ENCODE measurements at regions of chr12 and their contacts with region 1.

Region 1: GRCh38 chr12:49866859-49867579 is 24.1 kb upstream of the BCDIN3D start:
- DNase-seq: peak; percentile 66 to 95
- ATAC-seq: peak; percentile 55 to 92
- H3K4me3 ChIP-seq: no peak overlapping the region
- H3K27ac ChIP-seq: peak overlapping the region in 1 of 2 experiments; percentile 22; a peak in 1 of 6 replicates
- H3K4me1 ChIP-seq: no peaks in the 10 kb centered on the region; the same call in 2 of the 3 replicates
- CTCF ChIP-seq: peak; percentile 88
- EP300 ChIP-seq: no peak
- POLR2A ChIP-seq: no peak
- RAD21 ChIP-seq: peak; percentile 84 to 91

Region 2: DNA sequence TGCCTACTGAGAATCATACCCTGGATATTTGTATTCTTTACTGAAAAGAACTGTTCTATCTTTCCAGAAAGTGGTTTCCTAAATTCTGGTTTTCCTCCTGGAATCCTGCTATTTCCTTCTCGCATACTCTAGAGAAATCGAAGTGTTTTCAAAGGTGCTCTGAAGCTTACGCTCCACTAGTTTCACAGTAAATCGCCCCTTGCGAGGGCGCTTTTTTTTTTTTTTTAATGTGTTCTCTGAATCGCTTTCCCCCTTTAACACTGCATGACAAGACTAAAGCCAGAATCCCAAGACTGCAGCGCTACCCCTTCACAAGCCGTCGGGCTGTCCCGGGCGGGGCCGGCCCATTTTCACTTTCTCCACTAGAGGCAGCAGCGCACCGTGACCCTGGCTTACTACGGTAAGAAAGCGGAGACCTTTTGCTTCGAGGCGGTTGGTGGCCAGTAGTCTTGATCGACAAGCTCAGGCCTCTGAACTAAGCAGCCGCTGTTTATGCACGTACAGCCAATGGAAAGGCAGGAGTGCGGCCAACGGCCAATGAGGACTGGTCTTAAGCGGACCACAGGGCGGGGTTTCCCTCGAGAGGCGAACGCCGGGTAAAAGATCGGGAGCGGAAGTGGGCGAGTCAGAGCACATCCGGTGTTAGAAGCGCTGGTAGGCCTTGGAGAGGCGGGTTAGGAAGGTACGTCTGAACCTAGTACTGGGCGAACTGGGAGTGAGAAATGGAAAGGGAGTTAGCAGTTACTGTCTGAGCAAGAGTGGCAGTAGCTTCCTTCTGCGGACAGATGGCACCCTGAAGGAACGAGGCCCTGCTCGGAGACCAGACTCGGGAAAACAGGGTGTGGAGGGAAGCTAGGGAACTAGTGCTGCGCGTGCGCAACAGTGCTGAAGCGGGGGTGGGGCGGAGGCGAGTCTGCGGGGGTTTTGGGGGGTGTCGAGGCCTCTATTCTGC is 125.8 kb before region 1 on chr12 and contains the start of gene TMBIM6:
- CTCF ChIA-PET with region 1: interaction called, 10 read pairs
- POLR2A ChIA-PET with region 1: no interaction called
- DNase-seq: peak; percentile 97 to 100
- ATAC-seq: peak; percentile 98
- H3K4me3 ChIP-seq: peak within 1 kb of the TSS; percentile 67
- H3K27ac ChIP-seq: peak within 1 kb of the TSS; percentile 71 to 92
- H3K4me1 ChIP-seq: peaks cover 18% of the 10 kb centered on the region
- CTCF ChIP-seq: peak; percentile 81
- EP300 ChIP-seq: no peak
- POLR2A ChIP-seq: peak; percentile 97
- RAD21 ChIP-seq: peak; percentile 42 to 62; a peak in 4 of 5 replicates
- polyA plus RNA-seq, gene TMBIM6: 1,088 and 1,255 TPM in 2 replicates

Region 3: GRCh38 chr12:49882851-49883470 is 15.9 kb after region 1 on chr12:
- CTCF ChIA-PET with region 1: interaction called, 42 read pairs
- POLR2A ChIA-PET with region 1: no interaction called
- DNase-seq: no peak
- ATAC-seq: peak in 1 of 2 experiments; percentile 58; a peak in 3 of 6 replicates
- H3K4me3 ChIP-seq: no peak overlapping the region
- H3K27ac ChIP-seq: no peak overlapping the region
- H3K4me1 ChIP-seq: peaks cover 5% of the 10 kb centered on the region
- CTCF ChIP-seq: no peak
- EP300 ChIP-seq: no peak
- POLR2A ChIP-seq: no peak
- RAD21 ChIP-seq: no peak

Region 4: DNA sequence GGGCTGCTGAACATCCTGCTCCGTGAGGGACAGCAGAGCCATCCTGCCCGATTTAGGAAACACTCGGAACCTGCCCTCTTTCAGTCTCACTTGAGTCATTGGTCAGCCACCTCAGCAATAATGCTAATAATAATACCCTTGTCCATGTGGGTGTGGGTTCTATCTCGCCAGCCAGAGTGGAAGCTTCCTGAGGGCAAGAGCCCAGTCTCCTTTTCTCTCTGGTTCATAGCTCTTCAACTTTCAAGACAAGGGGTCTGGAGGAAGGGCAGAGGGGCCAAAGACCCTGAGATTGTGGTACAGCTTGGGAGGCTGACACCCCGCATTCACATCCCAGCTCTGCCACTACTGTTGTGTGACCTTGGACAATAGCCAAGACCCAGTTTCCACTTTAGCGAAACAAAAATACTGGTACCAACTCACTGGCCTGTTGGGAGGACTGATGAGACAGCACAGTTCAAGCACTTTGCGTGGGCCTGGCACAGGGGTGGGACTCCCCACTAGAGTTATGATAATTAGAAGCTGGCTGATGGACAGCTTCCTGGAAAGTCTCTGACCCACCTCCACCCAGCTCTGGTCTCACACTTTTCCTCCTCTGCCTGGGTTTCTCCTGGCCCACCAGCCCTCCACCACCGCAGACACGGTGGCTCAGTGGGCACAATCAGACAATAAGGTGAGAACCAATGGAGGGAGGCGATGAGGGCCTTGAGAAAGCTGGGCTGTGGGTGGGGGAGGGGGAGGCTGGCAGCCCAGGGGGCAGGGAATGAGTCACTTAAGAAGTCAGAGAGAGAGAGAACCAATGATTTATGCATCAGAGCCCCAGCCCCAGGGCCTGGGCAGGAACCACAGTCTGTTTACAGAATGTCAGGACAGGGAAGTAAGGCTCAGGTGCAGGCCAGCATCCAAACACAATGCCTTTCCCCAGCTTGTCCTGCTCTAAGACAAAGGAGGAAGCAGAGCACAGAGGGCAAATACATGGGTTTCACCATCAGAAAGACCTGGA is 27.0 kb after region 1 on chr12:
- CTCF ChIA-PET with region 1: interaction called, 28 read pairs
- POLR2A ChIA-PET with region 1: no interaction called
- DNase-seq: peak; percentile 42 to 68
- ATAC-seq: peak; percentile 14 to 47; a peak in 3 of 6 replicates
- H3K4me3 ChIP-seq: no peak overlapping the region
- H3K27ac ChIP-seq: peak overlapping the region; percentile 36 to 68; a peak in 5 of 6 replicates
- H3K4me1 ChIP-seq: peaks cover 13% of the 10 kb centered on the region
- CTCF ChIP-seq: no peak
- EP300 ChIP-seq: no peak
- POLR2A ChIP-seq: no peak
- RAD21 ChIP-seq: no peak

Region 5: GRCh38 chr12:49959570-49960465 is 92.8 kb after region 1 on chr12:
- CTCF ChIA-PET with region 1: interaction called, 104 read pairs
- POLR2A ChIA-PET with region 1: no interaction called
- DNase-seq: peak; percentile 54 to 64
- ATAC-seq: peak; percentile 9 to 52; a peak in 3 of 6 replicates
- H3K4me3 ChIP-seq: no peak overlapping the region
- H3K27ac ChIP-seq: peak overlapping the region in 1 of 2 experiments; percentile 59; a peak in 3 of 6 replicates
- H3K4me1 ChIP-seq: peaks cover 27% of the 10 kb centered on the region
- CTCF ChIP-seq: no peak
- EP300 ChIP-seq: no peak
- POLR2A ChIP-seq: no peak
- RAD21 ChIP-seq: no peak